CD4-positive, alpha-beta memory T cell (primary cell): ENCODE measurements at regions of chr19 and their contacts with region 1.

Region 1: GRCh38 chr19:54674021-54674617 is 11.3 kb downstream of the LILRB4 start:
- DNase-seq: peak in 1 of 5 donors; percentile 4
- H3K4me3 ChIP-seq: no peak overlapping the region
- H3K4me3 Mint-ChIP-seq: no peak overlapping the region
- H3K27ac ChIP-seq: no peak overlapping the region
- H3K27ac Mint-ChIP-seq: no peak overlapping the region
- H3K4me1 ChIP-seq: no peaks in the 10 kb centered on the region
- H3K4me1 Mint-ChIP-seq: no peaks in the 10 kb centered on the region
- H3K27me3 ChIP-seq: no peaks in the 10 kb centered on the region
- H3K27me3 Mint-ChIP-seq: peaks cover 6 to 9% of the 10 kb centered on the region in 2 donors

Region 2: DNA sequence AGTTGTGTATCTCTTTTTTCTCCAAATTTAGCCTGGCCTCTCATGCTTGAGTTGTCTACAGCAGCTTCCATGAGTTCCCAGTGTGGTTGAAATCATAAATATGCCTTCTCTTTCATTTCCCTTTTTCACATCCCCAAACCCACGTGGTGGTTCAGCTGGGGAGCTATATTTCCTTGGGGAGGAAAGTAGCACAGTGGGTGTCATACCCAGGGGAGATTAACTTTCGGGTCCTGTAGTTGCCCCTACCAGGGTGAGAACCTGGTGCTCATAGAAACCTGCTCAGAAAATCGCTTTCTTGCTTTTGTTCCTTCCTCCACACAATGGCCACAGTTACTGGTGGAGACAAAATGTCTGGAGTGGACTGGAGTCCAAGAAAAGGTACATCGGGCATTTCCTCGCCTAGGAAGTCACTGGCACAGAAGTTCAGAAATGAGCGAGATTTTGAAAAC is 328.2 kb before region 1 on chr19:
- CTCF ChIA-PET with region 1: no interaction called
- POLR2A ChIA-PET with region 1: no interaction called
- intact Hi-C with region 1: no loop called
- DNase-seq: no peak
- H3K4me3 ChIP-seq: no peak overlapping the region
- H3K4me3 Mint-ChIP-seq: no peak overlapping the region
- H3K27ac ChIP-seq: no peak overlapping the region
- H3K27ac Mint-ChIP-seq: no peak overlapping the region
- H3K4me1 ChIP-seq: no peaks in the 10 kb centered on the region
- H3K4me1 Mint-ChIP-seq: no peaks in the 10 kb centered on the region
- H3K27me3 ChIP-seq: no peaks in the 10 kb centered on the region
- H3K27me3 Mint-ChIP-seq: peaks cover 14 to 16% of the 10 kb centered on the region in 2 donors

Region 3: GRCh38 chr19:54653181-54653809 is 20.8 kb before region 1 on chr19:
- CTCF ChIA-PET with region 1: interaction called, 24 read pairs
- POLR2A ChIA-PET with region 1: no interaction called
- intact Hi-C with region 1: no loop called
- DNase-seq: peak in 1 of 5 donors; percentile 20
- H3K4me3 ChIP-seq: no peak overlapping the region
- H3K4me3 Mint-ChIP-seq: no peak overlapping the region
- H3K27ac ChIP-seq: no peak overlapping the region
- H3K27ac Mint-ChIP-seq: no peak overlapping the region
- H3K4me1 ChIP-seq: no peaks in the 10 kb centered on the region
- H3K4me1 Mint-ChIP-seq: no peaks in the 10 kb centered on the region
- H3K27me3 ChIP-seq: no peaks in the 10 kb centered on the region
- H3K27me3 Mint-ChIP-seq: peaks cover 9 to 18% of the 10 kb centered on the region in 2 donors

Region 4: GRCh38 chr19:54662730-54663129 is 11.4 kb before region 1 on chr19 and contains the start of gene LILRB4:
- CTCF ChIA-PET with region 1: interaction called, 11 read pairs
- POLR2A ChIA-PET with region 1: no interaction called
- intact Hi-C with region 1: no loop called
- DNase-seq: no peak
- H3K4me3 ChIP-seq: no peak within 1 kb of the TSS
- H3K4me3 Mint-ChIP-seq: no peak within 1 kb of the TSS
- H3K27ac ChIP-seq: no peak within 1 kb of the TSS
- H3K27ac Mint-ChIP-seq: no peak within 1 kb of the TSS
- H3K4me1 ChIP-seq: no peaks in the 10 kb centered on the region
- H3K4me1 Mint-ChIP-seq: no peaks in the 10 kb centered on the region
- H3K27me3 ChIP-seq: no peaks in the 10 kb centered on the region
- H3K27me3 Mint-ChIP-seq: peaks cover 10 to 23% of the 10 kb centered on the region in 2 donors
- total RNA-seq, gene LILRB4: 3.2 to 3.5 TPM

Region 5: GRCh38 chr19:54684527-54684926 is 10.4 kb after region 1 on chr19:
- CTCF ChIA-PET with region 1: interaction called, 31 read pairs
- POLR2A ChIA-PET with region 1: no interaction called
- intact Hi-C with region 1: no loop called
- DNase-seq: no peak
- H3K4me3 ChIP-seq: no peak overlapping the region
- H3K4me3 Mint-ChIP-seq: no peak overlapping the region
- H3K27ac ChIP-seq: no peak overlapping the region
- H3K27ac Mint-ChIP-seq: no peak overlapping the region
- H3K4me1 ChIP-seq: no peaks in the 10 kb centered on the region
- H3K4me1 Mint-ChIP-seq: no peaks in the 10 kb centered on the region
- H3K27me3 ChIP-seq: peaks cover 4% of the 10 kb centered on the region
- H3K27me3 Mint-ChIP-seq: peaks cover 6 to 16% of the 10 kb centered on the region in 2 donors

Region 6: GRCh38 chr19:54851353-54851752 is 177.2 kb after region 1 on chr19:
- CTCF ChIA-PET with region 1: no interaction called
- POLR2A ChIA-PET with region 1: no interaction called
- intact Hi-C with region 1: no loop called
- DNase-seq: no peak
- H3K4me3 ChIP-seq: no peak overlapping the region
- H3K4me3 Mint-ChIP-seq: no peak overlapping the region
- H3K27ac ChIP-seq: no peak overlapping the region
- H3K27ac Mint-ChIP-seq: no peak overlapping the region
- H3K4me1 ChIP-seq: no peaks in the 10 kb centered on the region
- H3K4me1 Mint-ChIP-seq: no peaks in the 10 kb centered on the region
- H3K27me3 ChIP-seq: no peaks in the 10 kb centered on the region
- H3K27me3 Mint-ChIP-seq: peaks cover 6 to 12% of the 10 kb centered on the region in 2 donors